Ascending aorta (tissue), 2 donors: ENCODE measurements at regions of chr7 and their contacts with region 1.

Region 1: GRCh38 chr7:152463709-152464311 is 28.0 kb upstream of the KMT2C start:
- DNase-seq: peak; percentile 99 to 100
- H3K4me3 ChIP-seq: peak overlapping the region; percentile 92 to 97
- H3K27ac ChIP-seq: peak overlapping the region; percentile 99 to 100
- H3K4me1 ChIP-seq: peaks cover 0 to 12% of the 10 kb centered on the region in 2 donors
- H3K27me3 ChIP-seq: no peaks in the 10 kb centered on the region
- CTCF ChIP-seq: no peak

Region 2: DNA sequence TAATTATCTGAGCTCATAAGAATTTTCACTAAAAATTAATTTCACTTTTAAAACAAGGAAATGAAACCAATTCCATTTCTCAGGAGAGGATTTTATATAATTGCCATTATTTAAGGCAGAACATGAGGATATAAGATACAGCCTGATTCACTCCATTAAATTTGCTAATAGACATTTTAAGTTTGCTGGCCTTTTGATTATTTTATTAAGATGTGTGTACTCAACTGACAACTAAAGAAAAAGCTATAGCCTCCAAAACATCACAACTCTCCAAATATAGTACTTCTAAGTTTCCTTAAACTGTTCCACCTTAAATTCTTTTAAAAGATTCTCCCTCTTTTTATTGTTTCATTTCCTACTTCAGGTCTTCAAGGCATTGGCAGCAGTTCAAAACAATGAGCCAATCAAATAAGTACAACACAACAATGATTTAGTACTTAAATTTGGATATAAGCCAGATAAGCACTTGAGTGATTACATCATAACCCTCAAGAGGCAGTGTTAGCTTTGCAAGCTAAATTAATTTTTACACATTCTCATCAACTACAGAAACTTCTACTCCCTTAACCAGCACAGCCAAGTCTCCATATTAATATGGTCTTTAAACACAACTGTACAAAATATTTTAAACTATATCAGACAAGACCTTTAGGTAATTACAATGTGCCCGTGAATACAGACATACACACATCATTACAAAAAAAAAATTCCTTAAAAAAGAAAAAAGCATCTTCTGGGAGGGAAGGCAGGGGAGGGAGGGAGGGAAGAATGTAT is 149.8 kb before region 1 on chr7:
- intact Hi-C with region 1: loop called (anchors 1 kb)
- DNase-seq: no peak
- H3K4me3 ChIP-seq: no peak overlapping the region
- H3K27ac ChIP-seq: peak overlapping the region in 1 of 2 donors; percentile 33
- H3K4me1 ChIP-seq: peaks cover 4 to 6% of the 10 kb centered on the region in 2 donors
- H3K27me3 ChIP-seq: no peaks in the 10 kb centered on the region
- CTCF ChIP-seq: no peak

Region 3: DNA sequence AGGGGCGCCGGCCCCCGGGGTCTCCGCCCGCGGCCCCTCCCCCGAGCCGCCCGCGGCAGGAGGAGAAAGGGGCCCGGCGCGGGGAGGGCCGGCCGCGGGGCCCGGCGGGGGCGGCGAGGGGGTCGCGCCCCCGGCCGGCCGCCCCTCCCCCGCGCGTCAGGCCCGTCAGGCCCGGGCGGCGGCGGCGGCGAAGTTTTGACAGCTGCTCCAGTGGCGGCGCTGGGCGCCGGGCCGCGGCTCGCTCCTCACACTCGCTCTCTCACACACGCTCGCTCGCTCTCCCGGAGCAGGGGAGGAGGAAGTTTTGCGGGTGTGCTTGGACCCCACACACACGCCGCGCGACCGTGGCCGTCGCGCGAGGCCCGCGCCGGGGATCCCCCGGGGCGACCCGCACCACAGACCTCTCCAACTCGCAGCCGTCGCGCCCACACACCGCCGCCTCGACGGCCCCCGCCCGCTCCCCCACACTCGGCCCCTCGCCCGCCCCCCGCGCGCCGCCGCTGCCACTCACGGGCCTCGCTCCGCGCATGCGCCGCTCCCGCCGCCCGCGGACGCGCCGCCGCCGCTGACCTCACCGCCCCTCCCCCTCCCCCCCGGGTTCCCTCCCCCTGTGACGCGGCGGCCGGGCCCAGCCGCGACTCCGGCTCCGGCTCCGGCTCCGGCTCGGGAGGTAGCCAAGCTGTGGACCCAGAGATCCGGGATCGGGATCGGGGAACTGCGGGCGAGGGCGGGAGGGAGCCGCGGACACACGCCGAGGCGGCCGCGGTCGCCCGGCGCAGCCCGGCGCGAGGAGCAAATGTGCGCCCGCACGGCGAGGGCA is 27.5 kb before region 1 on chr7:
- intact Hi-C with region 1: loop called (anchors 1 kb)
- DNase-seq: peak; percentile 73 to 96
- H3K4me3 ChIP-seq: peak overlapping the region; percentile 88 to 91
- H3K27ac ChIP-seq: peak overlapping the region; percentile 93 to 100
- H3K4me1 ChIP-seq: peaks cover 2 to 18% of the 10 kb centered on the region in 2 donors
- H3K27me3 ChIP-seq: no peaks in the 10 kb centered on the region
- CTCF ChIP-seq: no peak

Region 4: GRCh38 chr7:152675759-152676636 is 212.2 kb after region 1 on chr7 and contains the start of gene XRCC2:
- intact Hi-C with region 1: loop called (anchors 1 kb)
- DNase-seq: peak; percentile 66 to 95
- H3K4me3 ChIP-seq: peak within 1 kb of the TSS; percentile 83 to 89
- H3K27ac ChIP-seq: peak within 1 kb of the TSS; percentile 63 to 83
- H3K4me1 ChIP-seq: peaks cover 0 to 7% of the 10 kb centered on the region in 2 donors
- H3K27me3 ChIP-seq: no peaks in the 10 kb centered on the region
- CTCF ChIP-seq: no peak
- total RNA-seq, gene XRCC2: 0.11 TPM

Region 5: GRCh38 chr7:152759949-152760853 is 296.4 kb after region 1 on chr7:
- intact Hi-C with region 1: loop called (anchors 1 kb)
- DNase-seq: peak in 1 of 2 donors; percentile 65
- H3K4me3 ChIP-seq: peak overlapping the region; percentile 95 to 99
- H3K27ac ChIP-seq: peak overlapping the region; percentile 95 to 96
- H3K4me1 ChIP-seq: peaks cover 0 to 2% of the 10 kb centered on the region in 2 donors
- H3K27me3 ChIP-seq: no peaks in the 10 kb centered on the region
- CTCF ChIP-seq: no peak